ENCODE measurements at regions of chr19 and their contacts with region 1.

Region 1: GRCh38 chr19:1275260-1275975 is at the start of gene FAM174C:
- DNase-seq: peak; percentile 99
- ATAC-seq: peak; percentile 87
- H3K4me3 Mint-ChIP-seq: peak within 1 kb of the TSS; percentile 88
- H3K27ac Mint-ChIP-seq: peak within 1 kb of the TSS; percentile 98
- H3K4me1 Mint-ChIP-seq: peaks cover 50% of the 10 kb centered on the region
- H3K27me3 Mint-ChIP-seq: no peaks in the 10 kb centered on the region
- CTCF ChIP-seq: no peak
- total RNA-seq, gene FAM174C: 77.0 to 88.0 TPM

Region 2: GRCh38 chr19:1172363-1173158 is 102.9 kb before region 1 on chr19:
- CTCF ChIA-PET with region 1: no interaction called
- POLR2A ChIA-PET with region 1: no interaction called
- intact Hi-C with region 1: no loop called
- DNase-seq: no peak
- ATAC-seq: no peak
- H3K4me3 Mint-ChIP-seq: peak overlapping the region; percentile 87
- H3K27ac Mint-ChIP-seq: no peak overlapping the region
- H3K4me1 Mint-ChIP-seq: peaks cover 39% of the 10 kb centered on the region
- H3K27me3 Mint-ChIP-seq: no peaks in the 10 kb centered on the region
- CTCF ChIP-seq: no peak

Region 3: DNA sequence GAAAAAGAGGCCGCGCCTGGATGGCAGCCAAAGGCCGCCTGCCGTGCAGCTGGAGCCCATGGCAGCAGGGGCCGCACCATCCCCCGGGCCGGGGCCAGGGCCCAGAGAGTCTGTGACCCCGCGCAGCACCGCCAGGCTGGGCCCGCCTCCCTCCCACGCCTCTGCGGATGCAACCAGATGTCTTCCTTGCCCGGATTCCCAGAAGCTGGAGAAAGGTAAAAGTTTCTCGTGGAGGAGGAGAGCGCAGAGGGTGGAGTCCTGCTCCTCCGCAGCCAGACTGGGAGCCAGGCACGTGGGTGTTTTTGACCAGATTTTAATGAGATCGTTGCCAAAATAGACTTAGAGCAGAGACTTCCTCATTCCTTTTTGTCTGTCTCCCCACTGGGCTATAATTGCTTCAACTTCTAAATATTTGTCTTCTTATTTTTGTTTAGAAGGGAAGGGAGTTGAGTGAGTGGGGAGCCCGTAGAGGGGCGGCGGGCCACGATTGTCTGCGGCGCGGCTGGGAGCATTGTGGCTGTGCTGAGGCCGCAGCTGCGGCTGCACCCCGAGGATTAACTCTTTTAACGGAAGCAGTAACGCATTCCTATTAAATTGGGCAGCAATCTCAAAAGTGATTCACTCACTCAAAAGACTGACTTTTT is 85.5 kb after region 1 on chr19:
- CTCF ChIA-PET with region 1: interaction called, 12 read pairs
- POLR2A ChIA-PET with region 1: interaction called, 5 read pairs
- intact Hi-C with region 1: loop called (anchors 10 kb)
- DNase-seq: no peak
- ATAC-seq: no peak
- H3K4me3 Mint-ChIP-seq: no peak overlapping the region
- H3K27ac Mint-ChIP-seq: no peak overlapping the region
- H3K4me1 Mint-ChIP-seq: peaks cover 40% of the 10 kb centered on the region
- H3K27me3 Mint-ChIP-seq: no peaks in the 10 kb centered on the region
- CTCF ChIP-seq: no peak

Region 4: DNA sequence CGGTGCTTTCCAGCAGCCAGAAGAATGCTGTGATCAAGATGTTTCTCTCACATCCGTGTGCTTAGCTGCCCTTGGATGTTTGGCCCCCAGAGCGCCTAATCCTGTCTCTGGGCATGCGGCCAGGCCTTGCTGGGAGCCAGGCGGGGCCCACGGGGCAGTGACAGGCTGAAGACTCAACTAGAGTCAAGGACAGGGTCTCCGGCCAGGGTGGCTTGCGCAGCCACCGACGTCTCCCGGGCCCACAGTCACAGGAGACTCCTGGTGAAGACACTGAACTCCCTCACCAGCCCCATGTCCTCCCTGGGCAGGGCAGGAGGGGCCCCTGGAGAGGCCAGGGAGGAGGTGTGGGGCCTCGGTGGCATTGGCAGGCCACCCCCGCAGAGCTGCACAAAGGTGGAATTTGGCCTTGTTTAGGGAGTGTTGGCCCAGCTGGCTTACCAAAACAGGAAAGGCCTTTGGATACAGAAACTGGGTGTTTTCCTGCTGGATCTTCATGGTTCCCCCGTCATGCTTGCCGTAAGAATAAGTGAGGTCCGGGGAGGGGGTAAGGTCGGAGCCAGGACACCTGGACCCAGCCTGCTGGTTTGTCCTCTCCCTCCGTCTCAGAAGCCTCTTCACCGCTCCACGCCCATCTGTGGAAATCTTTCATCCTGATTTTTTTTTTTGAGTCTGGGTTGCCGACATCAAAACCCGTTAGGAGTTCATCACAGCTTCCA is 98.3 kb after region 1 on chr19:
- CTCF ChIA-PET with region 1: interaction called, 21 read pairs
- POLR2A ChIA-PET with region 1: interaction called, 4 read pairs
- intact Hi-C with region 1: loop called (anchors 10 kb)
- DNase-seq: no peak
- ATAC-seq: no peak
- H3K4me3 Mint-ChIP-seq: no peak overlapping the region
- H3K27ac Mint-ChIP-seq: no peak overlapping the region
- H3K4me1 Mint-ChIP-seq: no peaks in the 10 kb centered on the region
- H3K27me3 Mint-ChIP-seq: no peaks in the 10 kb centered on the region
- CTCF ChIP-seq: no peak

Measured in activated CD8-positive, alpha-beta T cell treated with anti-CD3 and anti-CD28 coated beads for 36 hours (primary cell).